Mammary epithelial cell (primary cell): ENCODE measurements at regions of chr6 and their contacts with region 1.

Region 1: DNA sequence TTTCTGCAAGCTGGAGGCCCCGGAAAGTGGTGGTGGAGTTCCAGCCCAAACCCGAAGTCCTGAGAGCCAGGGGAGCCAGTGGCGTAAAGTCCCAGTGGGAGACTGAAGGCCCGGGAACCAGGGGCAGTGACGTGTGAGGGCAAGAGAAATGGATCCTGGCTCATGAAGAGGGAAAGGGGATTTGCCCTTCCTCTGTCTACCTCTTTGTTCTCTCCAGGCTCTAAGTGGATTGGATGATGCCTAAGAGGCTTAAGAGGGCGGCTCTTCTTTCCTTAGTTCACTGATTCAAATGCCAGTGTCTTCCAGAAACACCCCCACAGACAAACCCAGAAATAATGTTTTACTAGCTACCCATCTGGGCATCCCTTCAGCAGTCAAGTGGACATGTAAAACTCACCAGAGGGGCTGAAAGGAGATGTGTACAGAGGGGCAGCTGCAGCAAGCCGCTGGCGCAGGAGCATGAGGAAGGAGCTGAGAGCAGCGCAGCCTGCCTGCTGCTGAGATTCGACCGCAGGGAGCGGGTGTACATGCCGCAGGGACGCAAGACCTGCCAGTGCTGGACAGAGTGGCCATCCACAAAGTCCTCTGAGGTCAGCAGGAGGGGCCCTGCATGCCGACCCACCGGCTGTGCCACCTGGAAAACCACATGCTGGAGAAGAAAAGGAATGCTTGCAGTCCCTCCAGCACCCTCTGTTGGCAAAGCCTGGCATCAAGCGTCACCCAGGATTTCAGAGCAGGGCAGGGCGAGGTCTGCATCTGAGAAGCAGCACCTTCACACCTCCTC is 29.5 kb downstream of the CDYL start:
- DNase-seq: peak; percentile 40
- H3K4me3 ChIP-seq: no peak overlapping the region
- H3K27ac ChIP-seq: peak overlapping the region; percentile 50
- H3K4me1 ChIP-seq: peaks cover 43% of the 10 kb centered on the region
- H3K27me3 ChIP-seq: no peaks in the 10 kb centered on the region
- CTCF ChIP-seq: peak; percentile 76 to 88

Region 2: GRCh38 chr6:4844108-4844507 is 38.4 kb after region 1 on chr6:
- CTCF ChIA-PET with region 1: no interaction called
- dilution Hi-C with region 1: no loop called
- in situ Hi-C with region 1: no loop called
- intact Hi-C with region 1: no loop called
- DNase-seq: no peak
- H3K4me3 ChIP-seq: no peak overlapping the region
- H3K27ac ChIP-seq: no peak overlapping the region
- H3K4me1 ChIP-seq: no peaks in the 10 kb centered on the region
- H3K27me3 ChIP-seq: no peaks in the 10 kb centered on the region
- CTCF ChIP-seq: peak; percentile 19 to 33

Region 3: GRCh38 chr6:4936681-4937041 is 130.9 kb after region 1 on chr6:
- CTCF ChIA-PET with region 1: no interaction called
- dilution Hi-C with region 1: no loop called
- in situ Hi-C with region 1: no loop called
- intact Hi-C with region 1: loop called (anchors 5 kb)
- DNase-seq: no peak
- H3K4me3 ChIP-seq: no peak overlapping the region
- H3K27ac ChIP-seq: no peak overlapping the region
- H3K4me1 ChIP-seq: peaks cover 19% of the 10 kb centered on the region
- H3K27me3 ChIP-seq: no peaks in the 10 kb centered on the region
- CTCF ChIP-seq: peak; percentile 48 to 57